ENCODE measurements at regions of chr1 and their contacts with region 1.

Region 1: GRCh38 chr1:93846211-93846991 is 32.6 kb downstream of the DNTTIP2 start:
- DNase-seq: peak; percentile 74 to 94 (median 83)
- ATAC-seq: peak; percentile 33
- H3K4me3 ChIP-seq: peak overlapping the region; percentile 82 to 98
- H3K4me3 Mint-ChIP-seq: peak overlapping the region; percentile 94
- H3K27ac ChIP-seq: peak overlapping the region; percentile 86 to 91
- H3K27ac Mint-ChIP-seq: peak overlapping the region; percentile 96
- H3K4me1 ChIP-seq: peaks cover 21% of the 10 kb centered on the region
- H3K4me1 Mint-ChIP-seq: peaks cover 31% of the 10 kb centered on the region
- H3K27me3 ChIP-seq: no peaks in the 10 kb centered on the region
- H3K27me3 Mint-ChIP-seq: no peaks in the 10 kb centered on the region
- CTCF ChIP-seq: no peak

Region 2: GRCh38 chr1:93021539-93022134 is 824.8 kb before region 1 on chr1:
- CTCF ChIA-PET with region 1: no interaction called
- POLR2A ChIA-PET with region 1: no interaction called
- intact Hi-C with region 1: loop called in 1 of 2 experiments (anchors 10 kb)
- DNase-seq: peak in 3 of 9 experiments; percentile 7 to 72 (median 57)
- ATAC-seq: peak; percentile 79
- H3K4me3 ChIP-seq: no peak overlapping the region
- H3K4me3 Mint-ChIP-seq: no peak overlapping the region
- H3K27ac ChIP-seq: no peak overlapping the region
- H3K27ac Mint-ChIP-seq: no peak overlapping the region
- H3K4me1 ChIP-seq: no peaks in the 10 kb centered on the region
- H3K4me1 Mint-ChIP-seq: peaks cover 3% of the 10 kb centered on the region
- H3K27me3 ChIP-seq: no peaks in the 10 kb centered on the region
- H3K27me3 Mint-ChIP-seq: peaks cover 11% of the 10 kb centered on the region
- CTCF ChIP-seq: peak; percentile 96

Region 3: GRCh38 chr1:93179886-93180722 is 666.3 kb before region 1 on chr1 and contains the start of gene TMED5:
- CTCF ChIA-PET with region 1: no interaction called
- POLR2A ChIA-PET with region 1: no interaction called
- intact Hi-C with region 1: loop called (anchors 1 to 10 kb)
- DNase-seq: peak; percentile 90 to 98 (median 95)
- ATAC-seq: peak; percentile 81
- H3K4me3 ChIP-seq: peak within 1 kb of the TSS; percentile 75 to 97
- H3K4me3 Mint-ChIP-seq: peak within 1 kb of the TSS; percentile 91
- H3K27ac ChIP-seq: peak within 1 kb of the TSS; percentile 83 to 98
- H3K27ac Mint-ChIP-seq: peak within 1 kb of the TSS; percentile 97
- H3K4me1 ChIP-seq: peaks cover 33% of the 10 kb centered on the region
- H3K4me1 Mint-ChIP-seq: peaks cover 49% of the 10 kb centered on the region
- H3K27me3 ChIP-seq: no peaks in the 10 kb centered on the region
- H3K27me3 Mint-ChIP-seq: no peaks in the 10 kb centered on the region
- CTCF ChIP-seq: peak; percentile 32
- total RNA-seq, gene TMED5: 38.3 to 38.8 TPM

Region 4: DNA sequence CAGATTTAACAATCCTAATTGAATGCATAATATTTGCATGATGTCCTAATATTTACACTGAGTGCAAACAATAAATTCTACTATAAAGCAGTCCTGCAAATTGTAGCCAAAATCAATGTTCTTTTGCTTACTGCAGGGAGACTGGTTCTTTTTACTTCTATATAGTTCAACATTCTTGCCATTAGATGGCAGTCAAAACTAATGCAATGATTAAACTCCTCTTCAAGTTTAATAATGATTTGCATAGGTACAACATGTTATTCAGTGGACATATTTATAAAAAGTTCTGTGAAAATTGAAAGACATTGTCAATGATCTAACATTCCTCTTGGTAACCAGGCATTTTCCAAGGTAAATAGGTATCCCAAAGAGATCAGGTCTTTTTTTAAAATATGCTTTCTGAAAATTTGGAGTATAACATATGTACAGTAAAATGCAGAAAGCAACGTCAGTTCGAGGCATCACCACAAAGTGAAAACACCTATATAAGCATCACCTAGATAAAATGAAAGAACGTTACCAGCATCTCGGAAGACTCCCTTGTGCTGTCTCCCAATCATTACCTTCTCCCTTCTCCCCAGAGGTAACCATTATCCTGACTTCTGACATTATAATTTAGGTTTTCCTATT is 408.3 kb before region 1 on chr1:
- CTCF ChIA-PET with region 1: interaction called, 6 read pairs
- POLR2A ChIA-PET with region 1: no interaction called
- intact Hi-C with region 1: loop called (anchors 1 to 2 kb)
- DNase-seq: peak in 2 of 9 experiments; percentile 45 to 59
- ATAC-seq: peak; percentile 52
- H3K4me3 ChIP-seq: no peak overlapping the region
- H3K4me3 Mint-ChIP-seq: no peak overlapping the region
- H3K27ac ChIP-seq: no peak overlapping the region
- H3K27ac Mint-ChIP-seq: no peak overlapping the region
- H3K4me1 ChIP-seq: no peaks in the 10 kb centered on the region
- H3K4me1 Mint-ChIP-seq: no peaks in the 10 kb centered on the region
- H3K27me3 ChIP-seq: no peaks in the 10 kb centered on the region
- H3K27me3 Mint-ChIP-seq: peaks cover 11% of the 10 kb centered on the region
- CTCF ChIP-seq: peak; percentile 52

Region 5: DNA sequence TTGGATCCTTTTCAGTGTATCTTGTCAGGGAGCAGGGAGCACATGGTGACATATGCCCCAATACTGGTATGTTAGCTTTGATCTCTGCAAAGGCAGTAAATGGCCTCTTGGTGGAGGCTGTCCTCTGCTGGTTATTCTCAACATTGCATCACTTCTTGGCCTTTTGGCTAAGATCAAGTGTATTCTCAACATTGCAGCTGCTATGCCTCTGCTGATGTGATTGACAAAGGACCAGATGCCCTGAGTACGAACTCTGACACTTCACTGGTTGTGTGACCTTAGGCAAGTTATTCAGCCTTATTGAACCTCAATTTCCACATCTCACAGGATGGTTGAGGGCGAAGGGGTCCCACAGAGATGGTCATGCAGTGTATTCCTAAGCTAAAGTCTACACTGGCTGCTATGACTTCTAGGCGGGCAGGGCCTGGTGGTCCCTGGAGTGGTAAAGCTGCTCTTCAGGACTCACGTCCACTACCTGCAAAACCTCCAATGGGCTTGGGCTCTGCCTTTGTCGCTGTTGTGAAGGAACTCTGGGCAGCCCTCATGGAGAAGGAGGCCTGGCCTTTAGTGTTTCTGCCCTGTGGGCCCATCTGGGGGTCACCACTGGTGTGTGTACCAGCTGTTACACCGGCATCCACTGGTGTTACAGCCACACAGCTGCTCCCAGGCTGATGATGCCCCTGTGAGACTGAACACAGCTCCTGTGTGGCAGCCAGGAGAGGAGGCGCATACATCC is 32.2 kb before region 1 on chr1:
- CTCF ChIA-PET with region 1: interaction called, 19 read pairs
- POLR2A ChIA-PET with region 1: interaction called, 3 read pairs
- intact Hi-C with region 1: no loop called
- DNase-seq: peak in 6 of 9 experiments; percentile 9 to 68 (median 50)
- ATAC-seq: peak; percentile 29
- H3K4me3 ChIP-seq: no peak overlapping the region
- H3K4me3 Mint-ChIP-seq: no peak overlapping the region
- H3K27ac ChIP-seq: no peak overlapping the region
- H3K27ac Mint-ChIP-seq: no peak overlapping the region
- H3K4me1 ChIP-seq: peaks cover 9% of the 10 kb centered on the region
- H3K4me1 Mint-ChIP-seq: peaks cover 19% of the 10 kb centered on the region
- H3K27me3 ChIP-seq: no peaks in the 10 kb centered on the region
- H3K27me3 Mint-ChIP-seq: no peaks in the 10 kb centered on the region
- CTCF ChIP-seq: peak; percentile 50

Region 6: DNA sequence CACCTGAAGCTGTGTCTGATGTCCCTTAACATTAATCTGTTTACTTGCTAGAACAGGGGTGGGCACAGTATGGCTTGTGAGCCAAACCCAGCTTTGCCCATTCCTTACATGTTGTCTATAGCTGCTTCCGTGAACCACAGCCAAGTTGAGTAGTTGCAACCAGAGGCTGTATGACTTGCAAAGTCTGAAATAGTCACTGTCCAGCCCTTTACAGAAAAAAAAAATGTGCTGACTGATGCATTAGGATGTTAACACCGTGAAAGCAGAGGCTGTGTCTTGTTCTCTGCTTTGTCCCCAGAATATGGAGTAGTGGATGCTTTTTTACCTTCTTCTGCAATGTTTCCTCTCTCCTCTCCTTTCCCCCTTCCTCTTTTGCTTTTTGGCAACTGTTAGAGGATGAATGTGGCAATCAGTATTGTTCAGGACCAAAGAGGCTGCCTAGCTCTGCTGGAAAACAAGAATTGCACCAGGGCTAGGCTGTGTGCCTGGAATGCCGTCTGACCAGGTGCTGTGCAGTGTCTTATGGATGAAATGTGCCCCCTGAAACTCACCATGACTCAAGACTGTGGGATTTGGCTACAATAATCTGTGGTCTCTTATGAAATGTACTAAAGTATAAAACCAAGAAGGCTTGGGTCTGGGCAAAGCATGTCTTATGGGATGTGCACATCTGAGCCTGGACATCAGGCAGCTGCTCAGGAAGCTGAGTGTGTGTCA is 142.4 kb after region 1 on chr1:
- CTCF ChIA-PET with region 1: no interaction called
- POLR2A ChIA-PET with region 1: no interaction called
- intact Hi-C with region 1: no loop called
- DNase-seq: no peak
- ATAC-seq: no peak
- H3K4me3 ChIP-seq: no peak overlapping the region
- H3K4me3 Mint-ChIP-seq: no peak overlapping the region
- H3K27ac ChIP-seq: no peak overlapping the region
- H3K27ac Mint-ChIP-seq: no peak overlapping the region
- H3K4me1 ChIP-seq: no peaks in the 10 kb centered on the region
- H3K4me1 Mint-ChIP-seq: no peaks in the 10 kb centered on the region
- H3K27me3 ChIP-seq: no peaks in the 10 kb centered on the region
- H3K27me3 Mint-ChIP-seq: peaks cover 27% of the 10 kb centered on the region
- CTCF ChIP-seq: no peak

Region 7: GRCh38 chr1:94417978-94418663 is 571.7 kb after region 1 on chr1 and contains the start of gene ABCD3:
- CTCF ChIA-PET with region 1: no interaction called
- POLR2A ChIA-PET with region 1: interaction called, 5 read pairs
- intact Hi-C with region 1: loop called (anchors 1 to 5 kb)
- DNase-seq: peak; percentile 93 to 99 (median 97)
- ATAC-seq: peak; percentile 91
- H3K4me3 ChIP-seq: peak within 1 kb of the TSS; percentile 63 to 81
- H3K4me3 Mint-ChIP-seq: no peak within 1 kb of the TSS
- H3K27ac ChIP-seq: peak within 1 kb of the TSS; percentile 67 to 85
- H3K27ac Mint-ChIP-seq: peak within 1 kb of the TSS; percentile 85
- H3K4me1 ChIP-seq: peaks cover 27% of the 10 kb centered on the region
- H3K4me1 Mint-ChIP-seq: peaks cover 42% of the 10 kb centered on the region
- H3K27me3 ChIP-seq: no peaks in the 10 kb centered on the region
- H3K27me3 Mint-ChIP-seq: peaks cover 2% of the 10 kb centered on the region
- CTCF ChIP-seq: no peak
- total RNA-seq, gene ABCD3: 17.9 to 18.1 TPM

Measured in CD8-positive, alpha-beta T cell (primary cell).